Activated naive CD4-positive, alpha-beta T cell treated with anti-CD3 and anti-CD28 coated beads, Interleukin-2, amount 10 ng/mL, durations not matched to agents 7 days and 5 days (primary cell): ENCODE measurements at regions of chr17 and their contacts with region 1.

Region 1: DNA sequence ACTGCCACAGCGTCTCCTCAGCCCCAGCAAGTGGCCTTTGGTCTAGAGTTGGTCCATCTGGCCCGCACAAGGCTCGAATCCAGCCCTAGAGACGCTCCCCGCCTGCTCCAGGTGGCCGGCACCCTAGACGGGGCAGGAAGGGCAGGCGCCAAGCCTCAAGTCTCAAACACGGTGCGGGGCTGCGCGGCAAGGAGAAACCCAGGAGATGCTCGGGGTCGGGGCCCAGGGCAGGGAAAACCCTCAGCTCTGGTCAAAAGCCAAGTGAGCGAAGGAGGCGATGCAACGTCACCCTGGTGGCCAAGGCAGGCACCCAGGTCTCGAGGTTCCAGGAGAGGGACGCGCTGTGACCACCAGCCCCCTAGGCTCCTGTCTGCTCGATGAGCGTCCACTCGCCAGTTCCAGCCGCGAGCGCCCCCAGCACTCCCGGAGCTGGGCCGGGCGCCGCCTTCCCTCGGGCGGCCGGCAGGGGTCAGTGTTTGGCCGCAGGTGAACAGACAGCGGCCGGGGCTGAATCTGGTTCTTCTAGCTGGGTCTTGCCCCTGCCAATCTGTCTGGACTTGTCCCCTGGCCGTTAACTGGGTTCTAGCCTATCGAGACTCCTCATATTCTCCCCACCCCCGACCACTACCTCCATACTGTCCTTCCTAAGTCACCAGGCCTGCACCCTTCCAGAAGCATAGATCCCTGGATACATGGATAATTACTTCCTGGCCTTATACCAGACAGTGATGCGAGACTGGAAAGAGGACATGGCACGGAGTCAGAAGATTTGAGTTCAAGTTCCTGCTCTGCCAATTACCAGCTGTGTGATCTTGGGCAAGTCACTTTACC is 44.0 kb downstream of the PRAC1 start:
- DNase-seq: peak; percentile 76
- H3K4me3 Mint-ChIP-seq: no peak overlapping the region
- H3K27ac Mint-ChIP-seq: no peak overlapping the region
- H3K4me1 Mint-ChIP-seq: no peaks in the 10 kb centered on the region
- H3K27me3 Mint-ChIP-seq: peaks cover 85% of the 10 kb centered on the region

Region 2: GRCh38 chr17:48663134-48663924 is 15.0 kb before region 1 on chr17:
- CTCF ChIA-PET with region 1: interaction called, 11 read pairs
- DNase-seq: no peak
- H3K4me3 Mint-ChIP-seq: no peak overlapping the region
- H3K27ac Mint-ChIP-seq: no peak overlapping the region
- H3K4me1 Mint-ChIP-seq: no peaks in the 10 kb centered on the region
- H3K27me3 Mint-ChIP-seq: peaks cover 43% of the 10 kb centered on the region

Region 3: GRCh38 chr17:48724251-48725003 is 46.1 kb after region 1 on chr17:
- CTCF ChIA-PET with region 1: interaction called, 28 read pairs
- DNase-seq: peak; percentile 88
- H3K4me3 Mint-ChIP-seq: peak overlapping the region; percentile 22
- H3K27ac Mint-ChIP-seq: peak overlapping the region; percentile 74
- H3K4me1 Mint-ChIP-seq: peaks cover 42% of the 10 kb centered on the region
- H3K27me3 Mint-ChIP-seq: peaks cover 99% of the 10 kb centered on the region

Region 4: GRCh38 chr17:48791128-48792032 is 113.0 kb after region 1 on chr17:
- CTCF ChIA-PET with region 1: interaction called, 22 read pairs
- DNase-seq: peak; percentile 35
- H3K4me3 Mint-ChIP-seq: no peak overlapping the region
- H3K27ac Mint-ChIP-seq: no peak overlapping the region
- H3K4me1 Mint-ChIP-seq: peaks cover 16% of the 10 kb centered on the region
- H3K27me3 Mint-ChIP-seq: peaks cover 91% of the 10 kb centered on the region

Region 5: DNA sequence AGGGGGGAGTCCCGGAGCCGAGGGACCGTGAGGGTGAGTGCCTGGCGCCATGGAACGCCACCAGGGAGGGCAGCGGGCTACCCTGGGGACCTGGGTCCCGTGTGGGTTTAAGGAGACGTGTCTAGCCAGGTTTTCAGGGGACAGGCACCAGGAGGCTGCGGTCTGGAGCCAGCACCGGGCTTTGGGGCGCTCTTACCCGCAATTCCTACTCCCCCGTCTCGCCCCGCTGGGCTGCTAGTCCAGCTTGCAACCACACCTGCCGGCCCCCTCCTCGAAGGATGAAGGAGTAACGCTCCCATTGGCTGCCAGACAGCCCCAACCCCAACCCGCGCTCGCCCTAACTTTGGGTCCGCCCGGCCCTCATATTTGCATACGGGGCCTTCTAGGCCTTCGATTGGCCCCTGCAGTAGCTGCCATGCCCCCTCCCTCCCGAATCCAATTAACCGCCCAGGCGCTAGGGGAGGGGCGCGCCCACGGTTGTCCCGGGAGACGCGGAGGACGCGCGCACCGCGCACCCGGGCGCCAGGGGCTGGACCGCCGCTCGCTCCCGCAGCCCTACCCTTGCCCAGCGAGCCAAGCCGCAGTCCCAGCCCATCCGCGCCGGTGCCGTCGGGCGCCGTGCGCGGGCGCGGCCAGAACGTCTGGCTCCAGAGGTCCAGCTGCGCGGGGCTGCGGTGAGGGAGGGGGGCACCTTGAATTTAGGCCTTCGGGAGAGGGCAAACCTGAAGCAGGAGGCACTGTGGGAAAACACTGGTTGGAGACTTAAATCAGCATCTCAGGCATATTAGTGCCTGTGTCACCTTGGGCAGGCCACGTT is 138.6 kb after region 1 on chr17 and contains the start of gene TTLL6:
- CTCF ChIA-PET with region 1: interaction called, 11 read pairs
- DNase-seq: peak; percentile 93
- H3K4me3 Mint-ChIP-seq: peak within 1 kb of the TSS; percentile 68
- H3K27ac Mint-ChIP-seq: peak within 1 kb of the TSS; percentile 6
- H3K4me1 Mint-ChIP-seq: peaks cover 16% of the 10 kb centered on the region
- H3K27me3 Mint-ChIP-seq: peaks cover 87% of the 10 kb centered on the region